Activated CD8-positive, alpha-beta T cell treated with anti-CD3 and anti-CD28 coated beads, Interleukin-2, amount 10 ng/mL, durations not matched to agents 7 days and 5 days (primary cell): ENCODE measurements at regions of chr1 and their contacts with region 1.

Region 1: GRCh38 chr1:206725109-206725963 is 40.6 kb downstream of the MAPKAPK2 start:
- DNase-seq: peak; percentile 81
- ATAC-seq: peak; percentile 66
- H3K4me3 Mint-ChIP-seq: no peak overlapping the region
- H3K27ac Mint-ChIP-seq: no peak overlapping the region
- H3K4me1 Mint-ChIP-seq: peaks cover 60% of the 10 kb centered on the region
- H3K27me3 Mint-ChIP-seq: no peaks in the 10 kb centered on the region

Region 2: DNA sequence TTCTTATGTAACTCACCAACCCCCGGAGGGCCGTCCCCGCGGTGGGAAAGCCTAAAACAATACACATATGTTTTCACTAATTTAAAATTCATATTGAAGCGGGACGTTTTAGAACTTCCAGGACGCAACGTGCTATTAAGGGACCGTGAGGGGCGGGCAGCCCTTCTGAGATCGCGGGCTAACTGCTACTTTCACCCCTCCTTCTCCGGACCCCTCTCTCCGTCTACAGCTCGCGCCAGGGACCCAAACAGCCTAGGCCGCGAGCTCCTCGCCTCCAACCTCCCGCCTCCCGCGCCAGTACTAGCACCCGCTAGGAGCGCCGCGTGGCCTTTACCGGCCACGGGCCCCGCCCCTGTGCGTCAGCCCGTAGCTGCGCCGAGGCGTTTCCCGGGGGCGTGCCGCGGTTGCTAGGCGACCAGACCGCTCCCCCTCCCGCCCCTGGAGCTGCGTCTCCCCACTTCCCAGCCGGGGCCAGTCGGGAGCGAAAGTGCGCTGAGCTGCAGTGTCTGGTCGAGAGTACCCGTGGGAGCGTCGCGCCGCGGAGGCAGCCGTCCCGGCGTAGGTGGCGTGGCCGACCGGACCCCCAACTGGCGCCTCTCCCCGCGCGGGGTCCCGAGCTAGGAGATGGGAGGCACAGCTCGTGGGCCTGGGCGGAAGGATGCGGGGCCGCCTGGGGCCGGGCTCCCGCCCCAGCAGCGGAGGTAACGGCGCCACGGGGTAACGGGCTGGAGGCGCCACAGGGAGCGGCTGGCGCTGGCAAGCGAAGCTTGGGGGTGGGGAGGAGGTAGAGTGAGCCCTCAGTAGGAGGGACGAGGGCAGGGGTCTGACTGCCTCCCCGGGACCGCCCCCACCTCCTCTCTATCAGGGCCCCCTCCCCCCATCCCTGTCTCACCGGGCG is 90.0 kb before region 1 on chr1 and contains the start of gene DYRK3:
- CTCF ChIA-PET with region 1: interaction called, 14 read pairs
- POLR2A ChIA-PET with region 1: no interaction called
- DNase-seq: peak; percentile 95
- ATAC-seq: peak; percentile 95
- H3K4me3 Mint-ChIP-seq: peak within 1 kb of the TSS; percentile 80
- H3K27ac Mint-ChIP-seq: peak within 1 kb of the TSS; percentile 83
- H3K4me1 Mint-ChIP-seq: peaks cover 27% of the 10 kb centered on the region
- H3K27me3 Mint-ChIP-seq: peaks cover 17% of the 10 kb centered on the region
- total RNA-seq, gene DYRK3: 5.3 to 5.9 TPM

Region 3: GRCh38 chr1:206706298-206706791 is 19.0 kb before region 1 on chr1:
- CTCF ChIA-PET with region 1: interaction called, 18 read pairs
- POLR2A ChIA-PET with region 1: no interaction called
- DNase-seq: no peak
- ATAC-seq: no peak
- H3K4me3 Mint-ChIP-seq: no peak overlapping the region
- H3K27ac Mint-ChIP-seq: no peak overlapping the region
- H3K4me1 Mint-ChIP-seq: peaks cover 76% of the 10 kb centered on the region
- H3K27me3 Mint-ChIP-seq: no peaks in the 10 kb centered on the region

Region 4: DNA sequence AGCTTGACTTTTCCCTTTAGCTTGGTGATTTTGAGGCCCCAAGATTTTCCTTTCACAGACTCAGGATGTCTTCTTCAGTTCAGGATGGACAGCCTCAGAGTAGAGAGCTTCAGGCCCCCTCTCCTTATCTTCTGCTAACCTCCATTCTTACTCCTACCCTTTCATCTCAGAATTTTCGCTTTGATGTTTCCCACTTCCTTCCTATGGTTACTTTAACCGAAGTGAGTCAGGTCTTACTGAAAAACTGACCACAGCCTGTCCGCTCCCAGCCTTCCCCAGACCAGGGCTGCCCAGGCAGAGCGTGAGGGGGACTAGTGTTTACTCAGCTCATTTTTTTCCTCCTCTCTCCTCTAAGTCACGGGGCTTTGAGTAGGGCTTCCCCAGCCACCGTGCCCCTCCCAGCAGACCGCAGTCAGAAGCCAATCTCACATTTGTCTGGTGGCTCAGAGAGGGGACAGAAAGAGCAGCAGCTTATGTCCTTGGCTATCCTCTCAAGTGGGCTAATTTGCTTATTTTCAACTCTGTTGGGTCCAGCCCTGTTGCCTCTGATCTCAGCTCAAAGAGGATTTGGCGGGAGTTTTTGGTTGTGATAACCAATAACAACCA is 41.0 kb after region 1 on chr1:
- CTCF ChIA-PET with region 1: interaction called, 24 read pairs
- POLR2A ChIA-PET with region 1: no interaction called
- DNase-seq: peak; percentile 85
- ATAC-seq: peak; percentile 80
- H3K4me3 Mint-ChIP-seq: peak overlapping the region; percentile 61
- H3K27ac Mint-ChIP-seq: peak overlapping the region; percentile 68
- H3K4me1 Mint-ChIP-seq: peaks cover 70% of the 10 kb centered on the region
- H3K27me3 Mint-ChIP-seq: peaks cover 19% of the 10 kb centered on the region

Region 5: GRCh38 chr1:206834711-206835110 is 109.4 kb after region 1 on chr1:
- CTCF ChIA-PET with region 1: interaction called, 14 read pairs
- POLR2A ChIA-PET with region 1: no interaction called
- DNase-seq: no peak
- ATAC-seq: no peak
- H3K4me3 Mint-ChIP-seq: no peak overlapping the region
- H3K27ac Mint-ChIP-seq: no peak overlapping the region
- H3K4me1 Mint-ChIP-seq: peaks cover 48% of the 10 kb centered on the region
- H3K27me3 Mint-ChIP-seq: peaks cover 25% of the 10 kb centered on the region

Region 6: DNA sequence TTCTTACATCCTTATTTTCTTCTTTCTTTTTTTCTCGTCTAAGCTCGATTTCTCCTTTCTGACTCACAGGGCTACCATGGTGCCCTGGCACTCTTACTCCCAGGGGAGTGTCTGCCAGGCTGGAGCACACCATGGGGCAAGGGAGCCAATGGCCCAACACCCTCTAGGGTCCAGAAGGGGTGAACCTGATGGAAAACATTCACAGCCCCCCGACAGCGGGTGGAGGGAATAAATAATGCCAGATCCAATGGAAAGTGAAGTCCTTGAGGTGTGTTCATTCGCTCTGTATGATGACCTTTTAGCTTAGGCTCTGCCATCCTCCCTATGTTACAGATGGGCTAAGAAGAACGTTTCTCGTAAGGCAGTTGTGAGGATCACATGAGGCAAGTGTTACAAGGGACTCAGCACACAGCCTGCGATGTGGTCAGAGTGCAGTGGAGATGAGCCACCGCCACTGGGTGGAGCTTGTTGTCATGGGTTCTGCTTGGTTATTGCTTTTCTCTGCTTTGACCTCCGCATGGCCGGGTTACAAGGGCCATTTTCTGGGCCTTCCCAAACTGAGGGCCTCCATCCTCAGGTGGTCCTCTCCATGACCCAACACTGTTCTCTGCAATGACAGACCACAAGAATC is 199.9 kb after region 1 on chr1:
- CTCF ChIA-PET with region 1: interaction called, 23 read pairs
- POLR2A ChIA-PET with region 1: no interaction called
- DNase-seq: peak; percentile 86
- ATAC-seq: peak; percentile 72
- H3K4me3 Mint-ChIP-seq: no peak overlapping the region
- H3K27ac Mint-ChIP-seq: no peak overlapping the region
- H3K4me1 Mint-ChIP-seq: peaks cover 29% of the 10 kb centered on the region
- H3K27me3 Mint-ChIP-seq: no peaks in the 10 kb centered on the region